ENCODE measurements at regions of chr5 and their contacts with region 1.

Region 1: GRCh38 chr5:132293066-132293991 is 865 bp upstream of the SLC22A4 start:
- DNase-seq: peak; percentile 81
- H3K4me3 ChIP-seq: peak overlapping the region; percentile 55 to 66 (median 60)
- H3K27ac ChIP-seq: peak overlapping the region; percentile 84
- H3K4me1 ChIP-seq: peaks cover 27% of the 10 kb centered on the region
- H3K27me3 ChIP-seq: no peaks in the 10 kb centered on the region
- CTCF ChIP-seq: peak in 1 of 2 donors; percentile 24

Region 2: GRCh38 chr5:132321109-132321721 is 27.9 kb after region 1 on chr5:
- CTCF ChIA-PET with region 1: no interaction called
- dilution Hi-C with region 1: no loop called
- in situ Hi-C with region 1: no loop called
- intact Hi-C with region 1: no loop called
- DNase-seq: no peak
- H3K4me3 ChIP-seq: no peak overlapping the region
- H3K27ac ChIP-seq: no peak overlapping the region
- H3K4me1 ChIP-seq: peaks cover 6% of the 10 kb centered on the region
- H3K27me3 ChIP-seq: no peaks in the 10 kb centered on the region
- CTCF ChIP-seq: no peak

Region 3: GRCh38 chr5:132344775-132345524 is 51.6 kb after region 1 on chr5:
- CTCF ChIA-PET with region 1: no interaction called
- dilution Hi-C with region 1: loop called (anchors 5 kb)
- in situ Hi-C with region 1: no loop called
- intact Hi-C with region 1: no loop called
- DNase-seq: no peak
- H3K4me3 ChIP-seq: no peak overlapping the region
- H3K27ac ChIP-seq: no peak overlapping the region
- H3K4me1 ChIP-seq: no peaks in the 10 kb centered on the region
- H3K27me3 ChIP-seq: no peaks in the 10 kb centered on the region
- CTCF ChIP-seq: no peak

Region 4: DNA sequence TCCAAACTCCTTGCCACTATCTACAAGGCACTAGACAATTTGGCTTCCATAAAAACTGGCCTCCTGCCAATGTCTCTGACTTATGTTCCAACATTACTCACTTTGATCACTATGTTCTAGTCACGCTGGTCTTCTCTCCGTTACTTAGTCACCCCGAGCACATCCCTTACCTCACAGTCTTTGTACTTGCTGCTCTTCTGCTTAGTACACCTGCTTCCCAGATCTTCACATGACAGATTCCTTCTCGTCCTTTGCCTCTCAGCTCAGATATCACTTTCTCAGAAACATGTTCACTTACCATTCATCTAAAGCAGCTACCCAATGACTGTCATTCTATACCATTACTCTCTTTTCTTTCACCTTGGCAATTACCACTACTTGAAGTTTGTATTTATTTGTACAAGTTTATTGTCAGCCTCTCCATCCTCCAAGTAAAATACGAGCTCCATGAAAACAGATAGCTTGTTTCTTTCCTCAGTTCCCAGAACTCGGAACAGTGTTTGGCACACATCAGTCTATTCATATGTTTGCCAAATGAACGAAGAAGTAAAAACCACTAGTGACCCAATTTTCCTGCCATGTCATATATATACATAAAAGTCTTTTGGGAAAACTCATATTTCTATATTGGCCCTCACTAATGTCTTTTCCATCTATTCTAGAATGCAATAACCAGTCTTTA is 70.2 kb after region 1 on chr5:
- CTCF ChIA-PET with region 1: no interaction called
- dilution Hi-C with region 1: no loop called
- in situ Hi-C with region 1: no loop called
- intact Hi-C with region 1: loop called (anchors 1 kb)
- DNase-seq: peak; percentile 95
- H3K4me3 ChIP-seq: no peak overlapping the region
- H3K27ac ChIP-seq: peak overlapping the region; percentile 92
- H3K4me1 ChIP-seq: peaks cover 48% of the 10 kb centered on the region
- H3K27me3 ChIP-seq: no peaks in the 10 kb centered on the region
- CTCF ChIP-seq: no peak

Region 5: GRCh38 chr5:132369474-132370180 is 76.3 kb after region 1 on chr5 and contains the start of gene SLC22A5:
- CTCF ChIA-PET with region 1: no interaction called
- dilution Hi-C with region 1: no loop called
- in situ Hi-C with region 1: no loop called
- intact Hi-C with region 1: loop called (anchors 1 kb)
- DNase-seq: peak; percentile 78
- H3K4me3 ChIP-seq: peak within 1 kb of the TSS; percentile 68 to 91 (median 85)
- H3K27ac ChIP-seq: peak within 1 kb of the TSS; percentile 94
- H3K4me1 ChIP-seq: peaks cover 38% of the 10 kb centered on the region
- H3K27me3 ChIP-seq: no peaks in the 10 kb centered on the region
- CTCF ChIP-seq: no peak
- total RNA-seq, gene SLC22A5: 11.5 to 13.8 TPM

Measured in mammary epithelial cell (primary cell).